ENCODE measurements at regions of chr2 and their contacts with region 1.

Region 1: DNA sequence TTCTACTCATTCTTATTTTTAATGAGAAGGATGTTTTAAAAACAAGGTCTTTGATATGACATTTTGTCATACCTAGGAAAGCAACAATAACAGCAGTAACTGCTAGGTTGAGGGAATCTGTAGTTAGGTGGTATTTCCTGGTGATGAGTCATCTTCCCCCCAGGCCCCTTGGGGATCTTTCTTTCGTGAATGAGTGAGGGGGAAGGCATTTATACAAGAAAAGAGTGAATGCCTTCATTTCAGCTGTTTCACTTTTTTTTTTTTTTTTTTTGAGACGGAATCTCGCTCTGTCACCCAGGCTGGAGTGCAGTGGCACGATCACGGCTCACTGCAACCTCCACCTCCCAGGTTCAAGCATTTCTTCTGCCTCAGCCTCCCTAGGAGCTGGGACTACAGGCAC is 108.6 kb downstream of the MAP4K4 start:
- DNase-seq: peak in 6 of 35 experiments; percentile 8 to 37 (median 24)
- ATAC-seq: peak; percentile 48 to 84 (median 64)
- H3K4me3 ChIP-seq: no peak overlapping the region
- H3K4me3 Mint-ChIP-seq: peak overlapping the region in 1 of 3 donors; percentile 25
- H3K27ac ChIP-seq: no peak overlapping the region
- H3K27ac Mint-ChIP-seq: peak overlapping the region; percentile 66 to 75
- H3K4me1 ChIP-seq: peaks cover 19 to 30% of the 10 kb centered on the region in 2 experiments
- H3K4me1 Mint-ChIP-seq: peaks cover 69 to 84% (median 77%) of the 10 kb centered on the region in 3 donors
- H3K27me3 ChIP-seq: no peaks in the 10 kb centered on the region
- H3K27me3 Mint-ChIP-seq: no peaks in the 10 kb centered on the region

Region 2: DNA sequence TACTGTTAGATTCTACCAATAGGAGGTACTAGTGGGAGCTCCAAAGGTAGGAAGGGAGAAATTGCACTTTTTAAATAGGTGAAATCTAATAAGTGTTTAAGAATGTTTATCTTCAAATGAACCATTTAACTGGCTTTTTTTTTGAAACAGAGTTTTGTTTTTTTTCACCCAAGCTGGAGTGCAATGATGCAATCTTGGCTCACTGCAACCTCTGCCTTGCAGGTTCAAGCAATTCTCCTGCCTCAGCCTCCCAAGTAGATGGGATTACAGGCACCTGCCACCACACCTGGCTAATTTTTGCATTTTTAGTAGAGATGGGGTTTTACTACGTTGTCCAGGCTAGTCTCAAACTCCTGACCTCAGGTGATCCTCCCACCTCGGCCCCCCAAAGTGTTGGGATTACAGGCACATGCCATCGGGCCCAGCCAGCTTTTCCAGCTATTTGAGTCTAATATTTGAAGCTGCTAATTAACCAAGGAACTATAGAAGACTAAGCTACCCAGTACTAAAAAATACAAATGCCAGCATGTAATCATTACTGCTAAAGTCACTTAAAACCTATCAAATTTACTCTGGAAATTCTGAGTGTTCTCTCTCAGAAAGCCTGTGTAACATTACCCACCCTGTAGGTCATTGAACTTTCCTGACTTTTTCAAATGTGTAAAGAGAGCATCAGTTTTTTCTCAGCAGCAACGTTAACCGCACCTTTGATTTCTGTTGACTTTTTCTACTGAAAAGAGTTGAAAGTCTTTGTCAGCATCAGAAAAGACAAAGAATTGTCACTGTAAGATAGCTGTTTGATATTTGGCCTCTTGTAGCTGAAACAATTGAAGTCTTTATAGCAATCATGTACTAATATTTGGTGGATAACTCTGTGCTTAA is 473.0 kb before region 1 on chr2:
- CTCF ChIA-PET with region 1: no interaction called
- POLR2A ChIA-PET with region 1: interaction called in 1 of 2 experiments, 13 read pairs
- DNase-seq: peak in 1 of 35 experiments; percentile 31
- ATAC-seq: peak in 1 of 4 experiments; percentile 37
- H3K4me3 ChIP-seq: no peak overlapping the region
- H3K4me3 Mint-ChIP-seq: peak overlapping the region in 1 of 3 donors; percentile 18
- H3K27ac ChIP-seq: no peak overlapping the region
- H3K27ac Mint-ChIP-seq: peak overlapping the region; percentile 55 to 69
- H3K4me1 ChIP-seq: peaks cover 50 to 55% of the 10 kb centered on the region in 2 experiments
- H3K4me1 Mint-ChIP-seq: peaks cover 2 to 25% (median 20%) of the 10 kb centered on the region in 3 donors
- H3K27me3 ChIP-seq: no peaks in the 10 kb centered on the region
- H3K27me3 Mint-ChIP-seq: no peaks in the 10 kb centered on the region

Region 3: DNA sequence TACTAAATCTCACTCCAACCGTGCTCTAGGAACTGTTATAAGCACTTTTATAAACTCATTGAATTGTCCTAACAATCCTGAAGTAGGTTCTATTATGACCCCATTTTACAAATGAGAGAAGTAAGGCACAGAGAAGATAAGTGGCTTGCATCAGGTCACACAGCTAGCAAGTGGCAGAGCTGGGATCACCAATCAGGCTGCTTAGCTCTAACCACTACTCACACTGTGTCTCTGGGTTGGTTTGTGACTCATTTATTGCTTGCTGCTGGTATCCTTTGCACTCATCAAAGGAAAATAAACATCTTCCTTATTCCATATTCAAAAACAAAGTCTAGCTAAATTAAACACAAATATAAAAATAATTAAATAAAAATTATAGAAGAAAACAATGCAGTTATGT is 143.2 kb after region 1 on chr2:
- CTCF ChIA-PET with region 1: no interaction called
- POLR2A ChIA-PET with region 1: no interaction called
- DNase-seq: no peak
- ATAC-seq: no peak
- H3K4me3 ChIP-seq: no peak overlapping the region
- H3K4me3 Mint-ChIP-seq: no peak overlapping the region
- H3K27ac ChIP-seq: no peak overlapping the region
- H3K27ac Mint-ChIP-seq: no peak overlapping the region
- H3K4me1 ChIP-seq: no peaks in the 10 kb centered on the region
- H3K4me1 Mint-ChIP-seq: no peaks in the 10 kb centered on the region
- H3K27me3 ChIP-seq: no peaks in the 10 kb centered on the region
- H3K27me3 Mint-ChIP-seq: peaks cover 3 to 6% of the 10 kb centered on the region in 2 donors